OCI-LY7 (cell line): ENCODE measurements at regions of chr6 and their contacts with region 1.

Region 1: DNA sequence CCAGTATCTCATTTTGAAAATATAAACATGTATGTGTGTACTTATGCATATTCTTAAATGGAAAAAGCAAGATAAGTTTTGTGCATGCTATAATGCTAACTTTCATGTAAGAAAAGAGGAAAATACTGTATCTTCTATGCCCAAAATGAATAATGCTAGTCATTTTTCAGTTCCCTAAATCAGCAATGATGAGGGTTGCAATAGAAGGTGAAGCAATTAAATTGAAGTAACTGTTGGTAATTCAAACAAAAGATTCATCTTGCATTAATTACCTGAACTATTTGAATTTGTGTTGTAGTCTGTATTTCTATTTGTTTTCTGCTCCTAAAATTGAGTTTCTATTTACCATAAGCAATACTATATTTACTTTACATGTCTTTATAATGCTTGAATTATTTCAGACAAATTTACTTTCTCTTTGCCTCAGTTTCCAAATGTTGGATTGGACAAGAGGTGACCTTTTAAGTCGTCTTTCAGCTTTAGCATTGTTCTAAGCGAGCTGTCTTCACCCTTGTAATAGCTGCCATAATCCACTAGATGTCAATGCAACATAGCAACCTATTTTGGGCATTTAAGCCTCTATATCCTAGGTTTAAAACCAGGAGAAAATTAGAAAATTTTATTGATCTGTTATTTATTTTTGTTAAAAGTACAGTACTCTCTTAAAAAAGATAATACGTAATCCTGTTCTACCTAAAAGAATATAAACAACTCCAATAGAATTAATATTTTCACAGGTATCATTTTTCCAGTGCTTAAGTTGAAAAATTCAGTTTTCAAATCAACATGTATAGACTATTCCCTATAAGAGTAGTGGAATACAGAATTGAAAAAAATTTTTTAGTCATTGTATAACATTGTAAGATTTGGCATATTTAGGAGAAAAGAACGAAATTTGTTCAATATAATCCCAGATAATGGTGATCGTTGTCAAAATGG is 52.3 kb upstream of the IFNGR1 start:
- DNase-seq: peak; percentile 66
- H3K4me3 ChIP-seq: no peak overlapping the region
- H3K27ac ChIP-seq: no peak overlapping the region
- H3K4me1 ChIP-seq: no peaks in the 10 kb centered on the region
- CTCF ChIP-seq: peak; percentile 97

Region 2: DNA sequence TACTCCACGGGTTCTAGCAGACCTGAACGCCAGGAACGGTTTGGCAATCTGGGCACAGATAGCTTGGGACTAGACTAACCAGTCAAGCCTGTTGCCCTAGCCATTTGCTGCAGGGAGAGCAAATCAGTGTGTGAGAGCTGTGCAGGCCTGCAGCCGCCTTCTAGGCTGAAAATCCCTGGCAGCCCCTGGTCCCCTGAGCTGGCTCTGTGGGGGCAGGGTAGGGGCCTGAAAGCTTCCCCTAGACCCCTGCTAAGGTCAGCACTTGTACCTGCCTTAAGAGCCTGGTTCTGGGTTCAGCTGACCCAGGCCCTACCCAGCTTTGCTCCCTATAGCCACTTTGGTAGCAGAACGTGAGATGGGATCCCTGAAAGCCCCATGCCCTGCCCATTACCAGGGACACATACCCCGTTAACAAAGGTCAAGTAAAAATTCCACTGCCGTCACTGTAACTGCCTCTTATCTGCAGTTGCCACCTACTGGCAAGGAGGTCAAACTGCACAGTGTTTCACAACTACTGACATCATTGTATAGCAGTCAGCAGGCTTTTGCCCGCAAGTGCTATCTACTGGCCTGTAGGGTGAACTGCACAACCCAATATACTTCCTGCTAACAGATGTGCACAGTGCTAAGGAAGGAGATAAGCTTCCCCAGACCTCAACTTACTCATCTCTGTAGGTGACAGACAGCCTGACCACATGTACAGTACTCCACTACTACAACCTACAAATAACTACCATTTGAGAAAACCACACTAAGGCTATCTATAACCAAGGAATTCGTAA is 317.7 kb after region 1 on chr6:
- CTCF ChIA-PET with region 1: no interaction called
- POLR2A ChIA-PET with region 1: interaction called, 3 read pairs
- intact Hi-C with region 1: loop called (anchors 5 kb)
- DNase-seq: peak; percentile 81
- H3K4me3 ChIP-seq: no peak overlapping the region
- H3K27ac ChIP-seq: no peak overlapping the region
- H3K4me1 ChIP-seq: no peaks in the 10 kb centered on the region
- CTCF ChIP-seq: peak; percentile 95